Activated T-helper 1 cell treated with anti-CD3 and anti-CD28 coated beads, Interleukin-12 subunit alpha, Interleukin-12 subunit beta, Interleukin-2, Interleukin-4 antibody, amounts not matched to agents 30 ng/mL and 10 ng/mL and 1 ng/mL, durations not matched to agents 14 hours and 24 hours and 36 hours (primary cell): ENCODE measurements at regions of chr6 and their contacts with region 1.

Region 1: DNA sequence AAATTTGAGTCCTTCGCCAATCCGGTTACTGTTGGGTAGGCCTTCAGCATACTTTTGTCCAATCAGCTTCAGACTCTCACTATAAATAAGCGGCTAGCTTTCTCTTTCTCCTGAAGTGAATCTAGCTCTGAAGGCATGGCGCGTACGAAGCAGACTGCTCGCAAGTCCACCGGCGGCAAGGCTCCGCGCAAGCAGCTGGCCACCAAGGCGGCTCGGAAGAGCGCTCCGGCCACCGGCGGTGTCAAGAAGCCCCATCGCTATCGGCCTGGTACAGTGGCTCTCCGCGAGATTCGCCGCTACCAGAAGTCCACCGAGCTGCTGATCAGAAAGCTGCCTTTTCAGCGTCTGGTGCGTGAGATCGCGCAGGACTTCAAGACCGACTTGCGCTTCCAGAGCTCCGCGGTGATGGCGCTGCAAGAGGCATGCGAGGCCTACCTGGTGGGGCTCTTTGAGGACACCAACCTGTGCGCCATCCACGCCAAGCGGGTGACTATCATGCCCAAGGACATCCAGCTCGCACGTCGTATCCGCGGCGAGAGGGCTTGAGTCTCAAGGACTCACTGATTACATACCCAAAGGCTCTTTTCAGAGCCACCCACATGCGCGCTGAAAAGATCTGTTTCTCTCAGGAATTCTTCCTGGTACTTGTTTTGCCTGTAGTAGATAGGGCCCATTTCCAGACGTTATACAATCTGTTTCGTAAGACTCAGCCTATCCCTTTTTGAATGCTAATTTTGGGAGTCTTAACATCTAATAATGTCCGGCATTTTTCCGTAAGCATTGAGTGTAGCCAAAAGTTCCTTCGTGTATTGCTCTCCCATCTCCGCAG is 102.0 kb downstream of the OR2B2 start:
- DNase-seq: peak; percentile 83
- H3K4me3 Mint-ChIP-seq: peak overlapping the region; percentile 91
- H3K27ac Mint-ChIP-seq: peak overlapping the region; percentile 96
- H3K4me1 Mint-ChIP-seq: peaks cover 78% of the 10 kb centered on the region
- H3K27me3 Mint-ChIP-seq: no peaks in the 10 kb centered on the region

Region 2: GRCh38 chr6:26196846-26197648 is 1613.1 kb before region 1 on chr6:
- intact Hi-C with region 1: loop called (anchors 2 kb)
- DNase-seq: peak; percentile 84
- H3K4me3 Mint-ChIP-seq: peak overlapping the region; percentile 92
- H3K27ac Mint-ChIP-seq: peak overlapping the region; percentile 95
- H3K4me1 Mint-ChIP-seq: peaks cover 54% of the 10 kb centered on the region
- H3K27me3 Mint-ChIP-seq: no peaks in the 10 kb centered on the region

Region 3: DNA sequence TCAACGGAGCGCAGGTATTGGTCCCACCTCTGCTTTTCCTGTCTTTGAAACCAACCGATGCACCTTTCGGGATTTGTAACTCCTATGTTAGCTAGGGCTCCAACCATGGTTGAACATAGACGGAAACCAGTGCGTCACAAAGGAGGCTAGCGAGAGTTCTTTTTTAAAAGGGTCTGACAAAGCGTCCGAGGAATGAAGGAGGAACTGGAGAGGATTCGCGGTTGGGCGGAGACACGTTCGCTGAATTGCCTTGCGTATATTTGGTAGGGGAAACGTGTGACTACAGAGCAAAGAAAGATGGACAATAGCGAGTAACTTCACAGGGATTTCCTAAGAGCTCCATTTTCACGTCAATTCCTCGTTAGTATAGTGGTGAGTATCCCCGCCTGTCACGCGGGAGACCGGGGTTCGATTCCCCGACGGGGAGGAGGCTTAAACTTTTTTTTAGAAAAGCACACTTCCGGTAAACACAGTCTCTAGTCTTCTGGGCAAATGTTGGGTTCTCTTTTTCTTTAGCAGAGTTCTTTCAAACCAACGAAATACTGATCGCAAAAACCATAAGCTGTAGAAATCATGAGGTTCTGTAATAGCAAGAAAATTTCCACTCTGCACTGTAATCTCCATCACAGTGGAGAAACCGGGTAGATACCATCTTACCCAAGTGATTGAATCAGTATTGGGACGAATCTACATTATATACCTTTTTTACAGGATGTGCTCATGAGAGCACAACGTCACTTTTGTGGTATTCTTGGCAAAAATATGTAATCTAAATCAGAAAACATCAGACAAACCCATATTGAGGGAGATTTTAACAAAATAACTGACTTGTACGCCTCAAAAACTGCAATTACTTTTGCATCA is 330.6 kb before region 1 on chr6:
- intact Hi-C with region 1: loop called (anchors 2 kb)
- DNase-seq: peak; percentile 81
- H3K4me3 Mint-ChIP-seq: no peak overlapping the region
- H3K27ac Mint-ChIP-seq: no peak overlapping the region
- H3K4me1 Mint-ChIP-seq: no peaks in the 10 kb centered on the region
- H3K27me3 Mint-ChIP-seq: peaks cover 10% of the 10 kb centered on the region

Region 4: GRCh38 chr6:27795697-27796494 is 14.3 kb before region 1 on chr6:
- intact Hi-C with region 1: loop called (anchors 1 kb)
- DNase-seq: peak; percentile 58
- H3K4me3 Mint-ChIP-seq: no peak overlapping the region
- H3K27ac Mint-ChIP-seq: peak overlapping the region; percentile 65
- H3K4me1 Mint-ChIP-seq: peaks cover 42% of the 10 kb centered on the region
- H3K27me3 Mint-ChIP-seq: peaks cover 12% of the 10 kb centered on the region

Region 5: GRCh38 chr6:27838058-27838944 is 28.1 kb after region 1 on chr6:
- intact Hi-C with region 1: loop called (anchors 1 kb)
- DNase-seq: peak; percentile 83
- H3K4me3 Mint-ChIP-seq: no peak overlapping the region
- H3K27ac Mint-ChIP-seq: no peak overlapping the region
- H3K4me1 Mint-ChIP-seq: peaks cover 25% of the 10 kb centered on the region
- H3K27me3 Mint-ChIP-seq: no peaks in the 10 kb centered on the region

Region 6: GRCh38 chr6:28863604-28864320 is 1053.6 kb after region 1 on chr6:
- intact Hi-C with region 1: loop called (anchors 5 kb)
- DNase-seq: peak; percentile 80
- H3K4me3 Mint-ChIP-seq: peak overlapping the region; percentile 94
- H3K27ac Mint-ChIP-seq: peak overlapping the region; percentile 93
- H3K4me1 Mint-ChIP-seq: peaks cover 47% of the 10 kb centered on the region
- H3K27me3 Mint-ChIP-seq: peaks cover 17% of the 10 kb centered on the region